Activated B cell treated with CpG ODN at 0.5 μM for 24 hours (primary cell): ENCODE measurements at regions of chr5 and their contacts with region 1.

Region 1: GRCh38 chr5:611721-612486 is at the start of gene CEP72:
- DNase-seq: peak; percentile 90
- ATAC-seq: peak; percentile 97
- H3K4me3 Mint-ChIP-seq: peak within 1 kb of the TSS; percentile 93
- H3K27ac Mint-ChIP-seq: peak within 1 kb of the TSS; percentile 81
- H3K4me1 Mint-ChIP-seq: peaks cover 48% of the 10 kb centered on the region
- H3K27me3 Mint-ChIP-seq: peaks cover 6% of the 10 kb centered on the region
- CTCF ChIP-seq: no peak
- total RNA-seq, gene CEP72: 15.1 and 17.4 TPM in 2 replicates

Region 2: GRCh38 chr5:217860-218456 is 393.9 kb before region 1 on chr5 and contains the starts of genes CCDC127 and SDHA:
- CTCF ChIA-PET with region 1: no interaction called
- POLR2A ChIA-PET with region 1: no interaction called
- intact Hi-C with region 1: loop called (anchors 2 kb)
- DNase-seq: peak; percentile 99
- ATAC-seq: peak; percentile 81
- H3K4me3 Mint-ChIP-seq: peak within 1 kb of the TSS; percentile 91
- H3K27ac Mint-ChIP-seq: peak within 1 kb of the TSS; percentile 85
- H3K4me1 Mint-ChIP-seq: peaks cover 65% of the 10 kb centered on the region
- H3K27me3 Mint-ChIP-seq: no peaks in the 10 kb centered on the region
- CTCF ChIP-seq: no peak
- total RNA-seq, gene CCDC127: 5.7 and 6.4 TPM in 2 replicates
- total RNA-seq, gene SDHA: 90.5 and 95.7 TPM in 2 replicates

Region 3: GRCh38 chr5:472656-473553 is 139.0 kb before region 1 on chr5:
- CTCF ChIA-PET with region 1: no interaction called
- POLR2A ChIA-PET with region 1: interaction called, 5 read pairs
- intact Hi-C with region 1: loop called (anchors 1 kb)
- DNase-seq: peak; percentile 97
- ATAC-seq: peak; percentile 86
- H3K4me3 Mint-ChIP-seq: peak overlapping the region; percentile 78
- H3K27ac Mint-ChIP-seq: peak overlapping the region; percentile 53
- H3K4me1 Mint-ChIP-seq: peaks cover 31% of the 10 kb centered on the region
- H3K27me3 Mint-ChIP-seq: peaks cover 21% of the 10 kb centered on the region
- CTCF ChIP-seq: no peak

Region 4: DNA sequence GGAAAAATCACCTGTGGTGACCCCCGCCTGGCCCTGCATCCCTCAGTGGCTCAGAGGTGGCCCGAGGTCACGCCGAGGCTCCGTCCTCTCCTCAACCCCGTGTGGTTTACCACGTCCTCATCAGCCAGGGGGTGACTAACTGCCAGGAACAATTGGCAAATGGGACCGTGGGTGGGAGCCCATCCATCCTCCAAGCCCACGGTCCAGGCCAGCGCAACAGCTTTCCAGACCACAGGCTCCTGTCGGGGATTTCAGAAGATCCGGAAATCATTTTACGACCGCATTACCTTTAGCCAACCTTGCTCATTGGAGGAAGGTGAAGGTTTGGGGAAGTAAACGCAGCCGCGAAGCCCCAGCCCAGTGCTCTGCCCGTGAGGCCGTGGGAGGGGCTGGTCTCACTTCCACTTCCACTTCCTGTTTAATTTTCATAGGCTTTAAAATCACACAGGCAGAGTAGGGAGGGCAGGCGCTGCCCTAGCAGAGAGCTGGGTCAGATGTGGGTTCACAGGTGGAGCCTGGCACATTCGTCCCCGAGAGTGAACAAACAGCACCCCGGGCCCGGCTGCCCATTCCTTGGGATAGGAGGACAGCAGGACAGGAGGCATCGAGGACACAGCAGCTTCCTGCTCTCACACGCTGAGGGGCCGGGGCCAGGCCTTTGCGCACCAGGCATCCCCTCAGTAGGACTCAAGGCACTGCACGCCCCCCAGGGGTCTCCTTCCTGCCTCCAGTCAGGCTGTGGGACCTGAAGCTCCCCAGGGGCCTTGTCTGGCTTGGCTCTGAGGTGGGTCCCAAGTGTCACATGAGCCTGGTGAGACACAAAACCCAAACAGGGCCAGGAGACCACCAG is 67.9 kb before region 1 on chr5:
- CTCF ChIA-PET with region 1: no interaction called
- POLR2A ChIA-PET with region 1: no interaction called
- intact Hi-C with region 1: loop called (anchors 1 kb)
- DNase-seq: peak; percentile 64
- ATAC-seq: peak; percentile 96
- H3K4me3 Mint-ChIP-seq: peak overlapping the region; percentile 65
- H3K27ac Mint-ChIP-seq: peak overlapping the region; percentile 85
- H3K4me1 Mint-ChIP-seq: peaks cover 36% of the 10 kb centered on the region
- H3K27me3 Mint-ChIP-seq: peaks cover 20% of the 10 kb centered on the region
- CTCF ChIP-seq: no peak

Region 5: GRCh38 chr5:671459-672328 is 59.8 kb after region 1 on chr5:
- CTCF ChIA-PET with region 1: no interaction called
- POLR2A ChIA-PET with region 1: no interaction called
- intact Hi-C with region 1: loop called (anchors 10 kb)
- DNase-seq: peak; percentile 50
- ATAC-seq: peak; percentile 84
- H3K4me3 Mint-ChIP-seq: no peak overlapping the region
- H3K27ac Mint-ChIP-seq: no peak overlapping the region
- H3K4me1 Mint-ChIP-seq: peaks cover 13% of the 10 kb centered on the region
- H3K27me3 Mint-ChIP-seq: peaks cover 8% of the 10 kb centered on the region
- CTCF ChIP-seq: no peak

Region 6: GRCh38 chr5:691817-692528 is 80.1 kb after region 1 on chr5:
- CTCF ChIA-PET with region 1: no interaction called
- POLR2A ChIA-PET with region 1: no interaction called
- intact Hi-C with region 1: loop called (anchors 5 kb)
- DNase-seq: no peak
- ATAC-seq: no peak
- H3K4me3 Mint-ChIP-seq: no peak overlapping the region
- H3K27ac Mint-ChIP-seq: no peak overlapping the region
- H3K4me1 Mint-ChIP-seq: no peaks in the 10 kb centered on the region
- H3K27me3 Mint-ChIP-seq: peaks cover 3% of the 10 kb centered on the region
- CTCF ChIP-seq: no peak